Cardiac septum (tissue), 1 donor: ENCODE measurements at regions of chr16 and their contacts with region 1.

Region 1: DNA sequence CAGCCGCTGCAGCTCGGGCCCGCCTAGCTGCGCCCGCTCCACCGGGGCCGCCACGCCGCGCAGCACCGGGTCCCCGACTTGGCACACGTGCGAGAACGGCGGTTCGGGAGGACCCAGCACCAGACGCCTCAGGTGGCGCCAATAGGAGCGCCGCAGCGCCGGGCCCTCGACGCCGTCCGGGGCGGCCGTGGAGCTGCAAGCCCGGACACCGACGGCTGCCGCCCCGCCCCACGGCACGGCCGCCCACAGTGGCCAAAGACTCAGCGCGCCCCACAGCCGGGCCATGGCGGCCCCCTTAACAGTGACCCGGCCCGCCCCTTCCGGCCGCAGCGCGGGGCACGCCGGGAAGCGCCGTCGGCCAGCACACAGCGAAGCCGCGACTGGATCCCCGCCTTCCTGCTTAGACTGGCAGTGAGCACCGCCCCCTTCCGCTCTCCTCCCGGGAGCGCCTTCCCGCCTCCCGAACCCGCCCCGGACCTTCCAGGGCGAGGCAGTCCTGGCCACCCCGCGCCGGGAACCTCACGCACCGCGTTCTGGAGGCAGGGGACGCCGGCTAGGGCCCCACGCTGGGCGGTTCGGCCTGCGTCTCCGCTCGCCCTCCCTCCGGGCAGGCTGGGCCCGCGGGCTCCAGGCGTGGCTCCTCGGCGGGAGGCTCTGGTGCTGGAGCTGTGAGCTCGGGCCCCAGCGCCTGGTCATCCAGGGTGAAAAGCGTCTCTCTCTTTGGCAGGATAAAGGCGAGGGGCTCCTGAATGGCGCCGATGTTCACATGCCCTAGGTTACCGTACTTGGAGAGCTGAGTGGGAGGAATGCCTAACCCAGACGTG is at the start of gene PDF:
- DNase-seq: peak; percentile 98
- total RNA-seq, gene PDF: 5.7 TPM

Region 2: GRCh38 chr16:69143116-69143515 is 187.4 kb before region 1 on chr16:
- intact Hi-C with region 1: no loop called
- DNase-seq: no peak

Region 3: DNA sequence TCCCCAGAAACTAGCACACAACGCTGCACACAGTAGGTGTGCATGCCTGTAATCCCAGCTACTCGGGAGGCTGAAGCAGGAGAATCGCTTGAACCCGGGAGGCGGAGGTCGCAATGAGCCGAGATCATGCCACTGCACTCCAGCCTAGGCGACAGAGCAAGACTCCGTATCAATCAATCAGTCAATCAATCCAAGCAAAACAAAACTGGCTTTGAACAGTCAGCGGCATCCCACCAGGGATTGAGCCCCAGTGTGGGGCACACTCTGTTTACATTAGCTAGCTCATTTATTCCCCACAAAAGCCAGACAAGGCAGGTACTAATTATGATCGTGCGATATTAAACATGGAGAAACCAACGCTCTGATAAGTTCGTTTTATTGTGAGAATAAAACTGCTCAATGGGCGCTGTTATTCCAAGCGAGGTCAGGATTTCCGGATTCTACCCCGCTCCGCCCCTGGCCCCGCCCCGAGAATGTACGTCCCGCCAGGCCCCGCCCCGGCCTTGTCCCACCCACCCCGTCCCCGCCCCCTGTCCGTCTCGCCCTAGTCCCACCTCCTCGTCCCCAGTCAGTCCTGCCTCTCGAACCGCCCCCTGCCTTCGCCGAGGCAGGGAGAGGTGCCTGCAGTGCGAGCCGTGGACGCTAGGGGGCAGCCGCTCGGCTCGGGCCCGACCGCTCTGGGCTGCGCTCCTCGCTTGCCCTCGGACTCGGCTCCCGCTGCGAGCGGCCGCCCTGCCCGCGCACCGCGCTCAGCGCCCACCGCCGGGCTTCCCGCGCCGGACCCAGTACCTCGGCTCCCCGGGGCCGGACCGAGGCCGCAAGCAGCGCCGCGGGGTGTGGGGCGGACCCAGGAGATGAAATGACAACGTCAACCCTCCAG is 19.6 kb before region 1 on chr16 and contains the start of gene VPS4A:
- intact Hi-C with region 1: loop called (anchors 1 kb)
- DNase-seq: peak; percentile 99
- total RNA-seq, gene VPS4A: 27.1 TPM